ENCODE measurements at regions of chr5 and their contacts with region 1.

Region 1: GRCh38 chr5:146878476-146879172 is at the start of gene PPP2R2B:
- DNase-seq: peak; percentile 71
- ATAC-seq: peak; percentile 83
- H3K4me3 Mint-ChIP-seq: peak within 1 kb of the TSS; percentile 76
- H3K27ac Mint-ChIP-seq: no peak within 1 kb of the TSS
- H3K4me1 Mint-ChIP-seq: peaks cover 11% of the 10 kb centered on the region
- H3K27me3 Mint-ChIP-seq: peaks cover 23% of the 10 kb centered on the region
- CTCF ChIP-seq: no peak
- total RNA-seq, gene PPP2R2B: 0.56 to 0.65 TPM

Region 2: GRCh38 chr5:146794326-146795029 is 84.1 kb before region 1 on chr5:
- CTCF ChIA-PET with region 1: no interaction called
- POLR2A ChIA-PET with region 1: no interaction called
- intact Hi-C with region 1: loop called (anchors 10 kb)
- DNase-seq: no peak
- ATAC-seq: peak; percentile 87
- H3K4me3 Mint-ChIP-seq: no peak overlapping the region
- H3K27ac Mint-ChIP-seq: peak overlapping the region; percentile 43
- H3K4me1 Mint-ChIP-seq: peaks cover 8% of the 10 kb centered on the region
- H3K27me3 Mint-ChIP-seq: no peaks in the 10 kb centered on the region
- CTCF ChIP-seq: no peak

Measured in activated CD8-positive, alpha-beta T cell treated with anti-CD3 and anti-CD28 coated beads for 36 hours (primary cell).